ENCODE measurements at regions of chr2 and their contacts with region 1.

Region 1: DNA sequence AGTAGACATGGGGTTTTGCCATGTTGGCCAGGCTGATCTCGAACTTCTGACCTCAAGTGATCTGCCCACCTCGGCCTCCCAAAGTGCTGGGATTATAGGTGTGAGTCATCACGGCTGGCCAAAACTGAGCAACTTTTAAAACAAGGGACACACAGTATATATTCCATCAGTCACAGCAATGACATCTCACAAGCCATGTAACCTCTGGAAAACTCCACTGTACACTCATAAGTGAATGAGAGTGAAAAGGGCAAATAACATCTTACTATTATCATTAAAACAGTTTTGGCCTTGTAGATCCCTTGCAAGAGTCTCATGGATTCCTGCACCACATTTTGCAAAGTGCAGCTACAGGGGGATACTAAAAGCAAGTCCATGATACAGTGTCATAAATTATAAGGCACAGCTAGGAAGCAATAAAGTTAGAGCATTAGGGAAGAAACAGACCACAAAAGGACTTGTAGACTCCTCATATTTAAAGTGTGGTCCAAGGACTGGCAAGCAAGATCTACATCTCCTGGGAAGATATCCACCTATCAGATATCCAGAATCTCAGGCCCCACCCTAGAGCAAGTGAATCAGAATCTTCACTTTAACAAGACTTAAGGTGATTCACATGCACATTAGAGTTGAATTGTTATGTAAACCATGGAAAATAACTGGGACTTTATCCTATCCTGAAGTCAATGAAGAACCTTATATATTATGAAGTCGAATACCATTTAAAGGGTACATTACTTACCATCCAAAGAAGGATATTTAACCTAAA is 5.7 kb downstream of the SMC6 start:
- DNase-seq: no peak
- H3K4me3 ChIP-seq: no peak overlapping the region
- H3K4me3 Mint-ChIP-seq: no peak overlapping the region
- H3K27ac Mint-ChIP-seq: no peak overlapping the region
- H3K4me1 ChIP-seq: peaks cover 10% of the 10 kb centered on the region
- H3K4me1 Mint-ChIP-seq: no peaks in the 10 kb centered on the region
- H3K27me3 ChIP-seq: no peaks in the 10 kb centered on the region
- H3K27me3 Mint-ChIP-seq: no peaks in the 10 kb centered on the region
- CTCF ChIP-seq: no peak

Region 2: GRCh38 chr2:17733599-17733998 is 14.3 kb before region 1 on chr2:
- CTCF ChIA-PET with region 1: no interaction called
- POLR2A ChIA-PET with region 1: no interaction called
- intact Hi-C with region 1: loop called (anchors 1 kb)
- DNase-seq: no peak
- H3K4me3 ChIP-seq: no peak overlapping the region
- H3K4me3 Mint-ChIP-seq: no peak overlapping the region
- H3K27ac Mint-ChIP-seq: no peak overlapping the region
- H3K4me1 ChIP-seq: no peaks in the 10 kb centered on the region
- H3K4me1 Mint-ChIP-seq: no peaks in the 10 kb centered on the region
- H3K27me3 ChIP-seq: no peaks in the 10 kb centered on the region
- H3K27me3 Mint-ChIP-seq: no peaks in the 10 kb centered on the region
- CTCF ChIP-seq: no peak